ENCODE measurements at regions of chr10 and their contacts with region 1.

Region 1: GRCh38 chr10:103481974-103482531 is 3.0 kb upstream of the CALHM3 start:
- DNase-seq: peak; percentile 52
- H3K4me3 Mint-ChIP-seq: no peak overlapping the region
- H3K27ac Mint-ChIP-seq: no peak overlapping the region
- H3K4me1 Mint-ChIP-seq: peaks cover 34% of the 10 kb centered on the region
- H3K27me3 Mint-ChIP-seq: peaks cover 22% of the 10 kb centered on the region

Region 2: GRCh38 chr10:103416436-103417147 is 65.5 kb before region 1 on chr10:
- CTCF ChIA-PET with region 1: interaction called, 176 read pairs
- DNase-seq: peak; percentile 81
- H3K4me3 Mint-ChIP-seq: no peak overlapping the region
- H3K27ac Mint-ChIP-seq: no peak overlapping the region
- H3K4me1 Mint-ChIP-seq: peaks cover 10% of the 10 kb centered on the region
- H3K27me3 Mint-ChIP-seq: no peaks in the 10 kb centered on the region

Region 3: GRCh38 chr10:103423748-103424147 is 58.3 kb before region 1 on chr10:
- CTCF ChIA-PET with region 1: interaction called, 176 read pairs
- DNase-seq: no peak
- H3K4me3 Mint-ChIP-seq: no peak overlapping the region
- H3K27ac Mint-ChIP-seq: peak overlapping the region; percentile 53
- H3K4me1 Mint-ChIP-seq: peaks cover 22% of the 10 kb centered on the region
- H3K27me3 Mint-ChIP-seq: no peaks in the 10 kb centered on the region

Region 4: DNA sequence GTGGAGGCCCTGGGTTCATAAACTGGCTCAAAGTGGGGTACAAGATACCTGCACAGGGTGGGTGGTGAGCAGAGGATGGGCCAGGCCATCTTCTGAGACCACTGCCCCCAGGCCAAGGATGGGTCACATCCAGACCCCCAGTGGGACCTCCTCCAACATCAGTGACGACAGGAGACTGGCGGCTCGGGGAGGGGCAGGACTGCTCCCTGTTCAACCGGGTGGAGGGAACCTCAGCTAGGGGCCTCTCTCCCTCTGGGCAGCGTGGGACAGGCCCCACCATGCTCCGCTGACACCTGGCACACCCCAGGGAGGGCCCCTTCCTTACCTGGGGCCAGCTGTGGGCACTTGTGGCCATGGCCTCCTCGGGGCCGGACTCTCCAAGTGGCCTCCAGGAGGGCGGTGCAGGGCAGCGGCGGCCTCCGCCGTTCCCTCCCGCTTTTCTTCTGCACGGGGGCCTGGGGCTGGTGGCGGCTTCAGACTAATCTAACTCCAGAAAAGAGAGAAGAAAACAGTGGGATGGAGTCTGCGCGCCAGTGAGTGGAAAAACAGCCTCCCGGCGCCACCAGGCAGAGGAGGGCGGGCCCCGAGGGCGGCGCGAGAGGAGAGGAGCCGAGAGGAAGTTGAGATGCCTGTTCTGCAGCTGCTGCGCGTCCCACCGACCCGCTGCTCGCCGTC is 30.1 kb before region 1 on chr10 and contains the start of gene CALHM2:
- CTCF ChIA-PET with region 1: interaction called, 34 read pairs
- DNase-seq: peak; percentile 77
- H3K4me3 Mint-ChIP-seq: peak within 1 kb of the TSS; percentile 99
- H3K27ac Mint-ChIP-seq: peak within 1 kb of the TSS; percentile 91
- H3K4me1 Mint-ChIP-seq: peaks cover 72% of the 10 kb centered on the region
- H3K27me3 Mint-ChIP-seq: no peaks in the 10 kb centered on the region

Region 5: DNA sequence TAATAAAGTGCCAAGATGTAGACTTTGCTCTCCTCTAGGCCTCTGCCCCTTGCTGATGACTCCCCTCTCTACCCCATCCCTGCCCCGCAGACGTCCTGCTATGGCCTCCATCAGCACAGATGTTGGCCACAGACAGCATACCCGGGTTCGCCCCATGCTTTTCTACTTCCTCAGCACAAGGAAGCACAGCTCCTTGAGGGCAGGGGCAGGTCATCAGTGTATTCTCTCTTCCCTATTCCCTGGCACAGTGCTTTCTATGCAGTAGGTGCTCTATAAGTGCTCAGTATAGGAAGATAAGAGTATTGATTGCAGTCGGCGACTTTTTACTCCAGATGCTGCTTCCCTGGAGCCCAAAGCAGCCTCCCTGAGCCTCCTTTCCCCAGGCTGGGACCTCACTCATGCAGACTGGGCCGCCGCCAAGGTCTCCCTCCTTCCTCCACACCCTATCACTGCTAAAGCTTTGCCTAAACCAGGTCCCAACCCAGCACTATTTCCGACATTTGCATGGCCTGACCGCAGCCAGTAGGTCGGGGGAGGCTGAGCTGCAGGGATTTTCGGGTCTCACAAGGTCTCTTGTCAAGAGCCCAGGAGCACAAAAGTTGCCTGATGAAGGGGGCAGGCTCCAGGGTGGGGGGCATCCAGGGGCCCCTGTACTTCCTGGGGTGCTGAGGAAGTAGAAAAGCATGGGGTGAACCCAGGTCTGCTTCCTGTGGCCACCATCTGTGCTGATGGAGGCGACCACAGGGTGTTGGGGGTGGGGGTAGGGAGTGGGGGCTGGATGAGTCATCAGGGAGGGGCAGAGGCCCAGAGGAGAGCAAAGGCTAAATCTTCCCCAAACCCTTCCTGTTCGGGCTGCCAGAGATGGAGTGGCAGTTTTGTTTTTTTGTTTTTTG is 11.0 kb before region 1 on chr10:
- CTCF ChIA-PET with region 1: interaction called, 14 read pairs
- DNase-seq: peak; percentile 90
- H3K4me3 Mint-ChIP-seq: peak overlapping the region; percentile 59
- H3K27ac Mint-ChIP-seq: peak overlapping the region; percentile 98
- H3K4me1 Mint-ChIP-seq: peaks cover 80% of the 10 kb centered on the region
- H3K27me3 Mint-ChIP-seq: peaks cover 4% of the 10 kb centered on the region

Region 6: GRCh38 chr10:103854686-103855423 is 372.8 kb after region 1 on chr10:
- CTCF ChIA-PET with region 1: no interaction called
- DNase-seq: peak; percentile 42
- H3K4me3 Mint-ChIP-seq: peak overlapping the region; percentile 70
- H3K27ac Mint-ChIP-seq: no peak overlapping the region
- H3K4me1 Mint-ChIP-seq: peaks cover 17% of the 10 kb centered on the region
- H3K27me3 Mint-ChIP-seq: peaks cover 91% of the 10 kb centered on the region

Region 7: GRCh38 chr10:104190695-104191094 is 708.6 kb after region 1 on chr10:
- CTCF ChIA-PET with region 1: no interaction called
- DNase-seq: no peak
- H3K4me3 Mint-ChIP-seq: no peak overlapping the region
- H3K27ac Mint-ChIP-seq: no peak overlapping the region
- H3K4me1 Mint-ChIP-seq: no peaks in the 10 kb centered on the region
- H3K27me3 Mint-ChIP-seq: peaks cover 28% of the 10 kb centered on the region